Activated CD4-positive, alpha-beta memory T cell treated with anti-CD3 and anti-CD28 coated beads, Interleukin-2, amount 10 ng/mL, durations not matched to agents 7 days and 5 days (primary cell): ENCODE measurements at regions of chr16 and their contacts with region 1.

Region 1: DNA sequence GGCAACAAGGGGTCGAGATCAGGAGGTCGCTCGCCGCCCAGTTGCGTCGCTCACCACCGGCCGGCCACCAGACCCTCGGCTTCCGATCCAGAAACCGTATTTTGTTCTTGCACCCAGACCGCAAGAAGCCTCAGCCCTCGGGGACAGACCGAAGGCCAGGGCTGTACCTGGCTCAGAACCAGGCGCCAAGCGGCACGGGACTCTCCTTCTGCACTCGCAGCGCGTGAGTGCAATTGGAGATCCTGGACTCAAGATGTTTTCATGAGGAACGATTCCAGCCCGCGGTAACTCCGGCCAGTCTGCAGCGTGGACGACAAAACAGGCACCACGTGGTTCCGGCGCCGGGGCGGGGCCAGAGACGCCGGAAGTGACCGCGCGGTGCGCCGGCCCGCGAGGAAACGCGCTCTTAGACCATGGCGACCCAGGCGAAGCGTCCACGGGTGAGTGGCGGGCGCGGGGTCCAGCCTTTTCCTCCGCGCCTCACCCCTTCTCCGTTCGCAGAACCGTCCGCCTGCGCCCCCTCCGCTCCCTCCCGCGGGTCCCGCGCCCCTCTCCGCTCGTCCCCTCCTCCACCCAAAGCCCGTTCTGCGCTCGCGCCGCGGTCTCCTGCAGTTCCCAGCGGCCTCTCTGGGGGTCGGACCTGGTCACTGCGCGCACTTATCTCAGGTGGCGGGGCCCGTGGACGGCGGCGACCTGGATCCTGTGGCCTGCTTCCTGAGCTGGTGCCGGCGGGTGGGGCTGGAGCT is at the start of gene SETD6:
- DNase-seq: peak; percentile 78
- H3K4me3 Mint-ChIP-seq: peak within 1 kb of the TSS; percentile 80
- H3K27ac Mint-ChIP-seq: peak within 1 kb of the TSS; percentile 33
- H3K4me1 Mint-ChIP-seq: peaks cover 46% of the 10 kb centered on the region
- H3K27me3 Mint-ChIP-seq: no peaks in the 10 kb centered on the region
- total RNA-seq, gene SETD6: 8.9 to 9.2 TPM

Region 2: GRCh38 chr16:58481226-58481869 is 34.0 kb before region 1 on chr16:
- CTCF ChIA-PET with region 1: no interaction called
- POLR2A ChIA-PET with region 1: no interaction called
- DNase-seq: no peak
- H3K4me3 Mint-ChIP-seq: no peak overlapping the region
- H3K27ac Mint-ChIP-seq: no peak overlapping the region
- H3K4me1 Mint-ChIP-seq: no peaks in the 10 kb centered on the region
- H3K27me3 Mint-ChIP-seq: peaks cover 5% of the 10 kb centered on the region

Region 3: GRCh38 chr16:58661199-58661830 is 146.0 kb after region 1 on chr16:
- CTCF ChIA-PET with region 1: interaction called, 14 read pairs
- POLR2A ChIA-PET with region 1: no interaction called
- DNase-seq: no peak
- H3K4me3 Mint-ChIP-seq: no peak overlapping the region
- H3K27ac Mint-ChIP-seq: no peak overlapping the region
- H3K4me1 Mint-ChIP-seq: no peaks in the 10 kb centered on the region
- H3K27me3 Mint-ChIP-seq: no peaks in the 10 kb centered on the region

Region 4: DNA sequence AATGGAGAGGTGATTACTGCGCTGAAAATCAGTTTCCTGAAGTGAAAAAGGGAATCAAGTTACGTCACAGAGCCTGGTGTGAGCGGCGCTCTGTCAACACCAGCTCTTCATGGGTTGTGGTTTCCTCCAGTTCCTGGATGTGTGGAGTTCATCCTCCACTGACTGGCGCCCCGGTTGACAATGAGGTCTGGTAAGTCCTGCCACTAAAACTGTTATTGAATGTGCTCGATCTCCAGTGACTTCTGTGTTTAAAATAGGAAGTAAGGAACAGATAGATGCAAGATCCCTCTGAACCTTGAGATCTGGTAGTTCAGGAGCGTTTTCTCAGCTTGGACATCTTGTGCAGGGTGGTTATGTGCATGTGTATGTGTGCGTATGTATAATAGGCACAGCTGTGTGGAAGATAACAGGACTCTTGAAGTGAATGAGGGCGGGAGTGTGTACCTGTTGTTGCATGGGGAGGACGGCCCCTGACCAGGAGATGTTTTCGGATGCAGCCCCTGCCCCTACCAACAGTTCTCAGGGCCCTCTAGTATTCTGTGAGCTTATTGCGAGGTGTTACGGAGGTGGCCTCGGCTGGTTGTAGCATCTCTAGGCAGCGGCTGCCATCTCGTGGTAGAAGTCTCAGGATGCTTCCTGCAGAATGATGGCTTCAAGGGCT is 240.8 kb after region 1 on chr16:
- CTCF ChIA-PET with region 1: interaction called, 28 read pairs
- POLR2A ChIA-PET with region 1: interaction called, 4 read pairs
- DNase-seq: peak; percentile 83
- H3K4me3 Mint-ChIP-seq: peak overlapping the region; percentile 43
- H3K27ac Mint-ChIP-seq: peak overlapping the region; percentile 16
- H3K4me1 Mint-ChIP-seq: peaks cover 10% of the 10 kb centered on the region
- H3K27me3 Mint-ChIP-seq: no peaks in the 10 kb centered on the region